ENCODE measurements at regions of chr4 and their contacts with region 1.

Region 1: GRCh38 chr4:38310446-38311043 is 350.3 kb downstream of the PTTG2 start:
- DNase-seq: no peak
- ATAC-seq: no peak
- H3K4me3 ChIP-seq: no peak overlapping the region
- H3K27ac ChIP-seq: no peak overlapping the region
- H3K4me1 ChIP-seq: peaks cover 0 to 13% (median 0%) of the 10 kb centered on the region in 9 donors
- H3K27me3 ChIP-seq: no peaks in the 10 kb centered on the region
- CTCF ChIP-seq: no peak

Region 2: DNA sequence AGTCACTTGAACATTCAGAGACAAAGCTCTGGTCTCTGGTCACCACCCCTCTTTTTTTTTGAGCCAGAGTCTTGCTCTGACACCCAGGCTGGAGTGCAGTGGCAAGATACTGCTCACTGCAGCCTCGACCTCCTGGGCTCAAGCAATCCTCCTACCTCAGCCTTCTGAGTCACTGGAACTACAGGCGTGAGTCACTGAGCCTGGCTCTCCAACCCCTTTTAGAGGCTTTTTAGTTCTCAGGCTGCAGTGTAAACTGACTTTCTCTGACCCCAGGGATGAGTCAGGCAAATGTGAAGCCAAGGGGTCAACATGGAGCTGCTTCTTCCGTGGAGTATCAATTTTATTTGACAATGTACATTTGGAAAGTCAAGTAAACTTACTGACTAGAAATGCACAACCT is 121.1 kb before region 1 on chr4:
- intact Hi-C with region 1: loop called in 6 of 10 experiments (anchors 5 kb)
- DNase-seq: no peak
- ATAC-seq: no peak
- H3K4me3 ChIP-seq: no peak overlapping the region
- H3K27ac ChIP-seq: peak overlapping the region in 1 of 10 donors; percentile 84
- H3K4me1 ChIP-seq: peaks cover 4 to 47% (median 17%) of the 10 kb centered on the region in 9 donors
- H3K27me3 ChIP-seq: no peaks in the 10 kb centered on the region
- CTCF ChIP-seq: no peak

Region 3: GRCh38 chr4:38333219-38333618 is 22.7 kb after region 1 on chr4:
- intact Hi-C with region 1: loop called in 1 of 10 experiments (anchors 2 kb)
- DNase-seq: no peak
- ATAC-seq: no peak
- H3K4me3 ChIP-seq: no peak overlapping the region
- H3K27ac ChIP-seq: peak overlapping the region in 1 of 10 donors; percentile 55
- H3K4me1 ChIP-seq: peaks cover under 1 to 62% (median 18%) of the 10 kb centered on the region in 9 donors
- H3K27me3 ChIP-seq: no peaks in the 10 kb centered on the region
- CTCF ChIP-seq: no peak

Region 4: DNA sequence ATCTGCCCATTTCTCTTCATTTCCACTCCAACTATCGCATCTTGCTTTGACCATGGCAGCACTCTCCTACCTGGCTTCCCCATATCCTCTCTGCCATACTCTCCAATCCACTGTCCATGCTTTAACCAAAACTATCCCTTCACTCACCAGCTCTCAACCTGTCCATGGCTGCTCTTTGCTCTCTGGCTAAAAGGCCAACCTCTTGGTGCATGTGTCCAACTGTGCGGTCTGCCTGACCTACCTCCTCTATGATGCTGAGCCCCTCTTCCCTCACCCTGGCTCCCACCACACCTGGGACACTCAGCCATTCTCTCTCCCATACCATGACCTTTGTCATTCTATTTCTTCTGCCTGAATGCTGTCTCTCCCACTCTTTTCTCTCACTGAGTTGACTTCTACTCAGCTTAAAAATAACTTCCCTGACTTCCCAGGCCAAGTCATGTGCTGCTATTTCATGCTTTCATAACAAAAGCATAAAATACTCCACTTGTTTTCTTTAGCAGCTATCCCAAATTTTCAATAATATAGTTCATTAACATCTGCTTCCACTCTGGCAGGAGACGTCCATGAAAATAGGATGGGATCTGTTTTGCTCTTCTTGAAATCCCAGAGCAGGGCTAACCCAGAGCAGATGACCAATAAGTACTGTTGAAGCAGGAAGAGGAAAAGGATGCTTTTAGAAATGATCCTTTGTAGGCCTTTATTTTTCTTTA is 323.7 kb after region 1 on chr4:
- intact Hi-C with region 1: no loop called
- DNase-seq: no peak
- ATAC-seq: peak in 4 of 8 donors; percentile 33 to 47 (median 37)
- H3K4me3 ChIP-seq: no peak overlapping the region
- H3K27ac ChIP-seq: peak overlapping the region in 2 of 10 donors; percentile 20 to 49
- H3K4me1 ChIP-seq: peaks cover 0 to 11% (median 5%) of the 10 kb centered on the region in 9 donors
- H3K27me3 ChIP-seq: no peaks in the 10 kb centered on the region
- CTCF ChIP-seq: no peak

Region 5: DNA sequence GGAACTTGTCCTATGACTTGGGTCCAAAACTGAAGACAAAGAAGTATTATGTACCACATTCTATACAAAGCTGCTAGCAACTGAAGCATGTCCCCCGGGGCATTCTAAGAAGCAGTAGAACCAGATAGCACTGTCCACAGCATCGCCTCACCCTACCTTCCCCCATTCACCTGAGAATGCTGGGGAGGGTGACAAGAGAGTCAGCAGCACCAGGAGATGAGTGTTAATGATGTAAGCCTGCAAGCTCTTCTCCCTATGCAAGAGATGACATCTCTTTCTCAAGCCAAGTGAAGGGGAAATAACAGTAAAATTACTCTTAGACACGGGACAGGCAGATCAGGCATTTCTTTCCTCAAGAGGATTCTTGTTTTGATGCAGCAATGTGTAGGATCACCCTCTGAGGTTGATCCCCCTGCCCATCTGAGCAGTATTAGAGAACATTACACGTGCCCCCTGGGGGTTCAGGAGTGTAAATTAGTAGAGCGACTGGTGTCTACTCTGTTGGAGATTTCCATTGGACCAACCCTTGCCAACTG is 508.0 kb after region 1 on chr4:
- intact Hi-C with region 1: no loop called
- DNase-seq: no peak
- ATAC-seq: no peak
- H3K4me3 ChIP-seq: no peak overlapping the region
- H3K27ac ChIP-seq: no peak overlapping the region
- H3K4me1 ChIP-seq: peaks cover 0 to 59% (median 0%) of the 10 kb centered on the region in 9 donors
- H3K27me3 ChIP-seq: peaks cover 0 to 3% (median 0%) of the 10 kb centered on the region in 7 donors
- CTCF ChIP-seq: no peak